ENCODE measurements at regions of chr16 and their contacts with region 1.

Region 1: GRCh38 chr16:27367461-27368357 is 34.3 kb upstream of the IL21R start:
- DNase-seq: peak; percentile 76
- H3K4me3 Mint-ChIP-seq: peak overlapping the region; percentile 56
- H3K27ac Mint-ChIP-seq: peak overlapping the region; percentile 96
- H3K4me1 Mint-ChIP-seq: peaks cover 67% of the 10 kb centered on the region
- H3K27me3 Mint-ChIP-seq: no peaks in the 10 kb centered on the region

Region 2: GRCh38 chr16:26598061-26598460 is 769.6 kb before region 1 on chr16:
- intact Hi-C with region 1: loop called (anchors 1 kb)
- DNase-seq: peak; percentile 84
- H3K4me3 Mint-ChIP-seq: peak overlapping the region; percentile 48
- H3K27ac Mint-ChIP-seq: peak overlapping the region; percentile 97
- H3K4me1 Mint-ChIP-seq: peaks cover 85% of the 10 kb centered on the region
- H3K27me3 Mint-ChIP-seq: no peaks in the 10 kb centered on the region

Region 3: DNA sequence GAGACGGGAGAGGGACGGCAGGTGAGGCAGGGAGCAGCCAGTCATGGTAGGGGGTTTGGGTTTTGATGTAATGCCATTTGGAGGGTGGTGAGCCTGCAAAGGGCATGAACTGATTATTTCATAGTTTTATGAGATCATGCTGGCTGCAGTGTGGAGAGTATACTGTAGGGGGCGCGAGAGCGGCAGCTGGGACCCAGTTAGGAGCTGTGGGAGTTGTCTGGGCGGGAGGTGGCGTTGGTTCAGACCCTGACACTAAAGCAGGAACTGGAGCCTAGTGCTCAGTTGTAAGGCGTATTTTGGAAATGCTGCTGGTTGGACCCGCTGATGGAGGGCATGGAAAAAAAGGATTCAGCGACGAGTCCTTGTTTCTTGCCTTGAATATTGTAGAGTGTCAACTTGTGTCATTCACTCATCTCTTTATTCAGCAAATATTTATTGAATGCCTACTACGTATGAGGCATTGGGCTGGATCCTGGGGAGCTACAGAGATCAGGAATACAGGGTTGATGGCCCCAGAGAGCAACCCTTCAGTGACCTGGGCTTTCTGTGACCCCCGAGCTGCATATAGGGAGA is 188.1 kb before region 1 on chr16:
- intact Hi-C with region 1: loop called (anchors 1 kb)
- DNase-seq: peak; percentile 78
- H3K4me3 Mint-ChIP-seq: no peak overlapping the region
- H3K27ac Mint-ChIP-seq: no peak overlapping the region
- H3K4me1 Mint-ChIP-seq: peaks cover 32% of the 10 kb centered on the region
- H3K27me3 Mint-ChIP-seq: peaks cover 11% of the 10 kb centered on the region

Region 4: GRCh38 chr16:27268376-27269299 is 99.1 kb before region 1 on chr16 and contains the start of gene NSMCE1:
- intact Hi-C with region 1: loop called (anchors 1 kb)
- DNase-seq: peak; percentile 94
- H3K4me3 Mint-ChIP-seq: peak within 1 kb of the TSS; percentile 96
- H3K27ac Mint-ChIP-seq: peak within 1 kb of the TSS; percentile 97
- H3K4me1 Mint-ChIP-seq: peaks cover 75% of the 10 kb centered on the region
- H3K27me3 Mint-ChIP-seq: no peaks in the 10 kb centered on the region
- total RNA-seq, gene NSMCE1: 128 and 134 TPM in 2 replicates

Region 5: DNA sequence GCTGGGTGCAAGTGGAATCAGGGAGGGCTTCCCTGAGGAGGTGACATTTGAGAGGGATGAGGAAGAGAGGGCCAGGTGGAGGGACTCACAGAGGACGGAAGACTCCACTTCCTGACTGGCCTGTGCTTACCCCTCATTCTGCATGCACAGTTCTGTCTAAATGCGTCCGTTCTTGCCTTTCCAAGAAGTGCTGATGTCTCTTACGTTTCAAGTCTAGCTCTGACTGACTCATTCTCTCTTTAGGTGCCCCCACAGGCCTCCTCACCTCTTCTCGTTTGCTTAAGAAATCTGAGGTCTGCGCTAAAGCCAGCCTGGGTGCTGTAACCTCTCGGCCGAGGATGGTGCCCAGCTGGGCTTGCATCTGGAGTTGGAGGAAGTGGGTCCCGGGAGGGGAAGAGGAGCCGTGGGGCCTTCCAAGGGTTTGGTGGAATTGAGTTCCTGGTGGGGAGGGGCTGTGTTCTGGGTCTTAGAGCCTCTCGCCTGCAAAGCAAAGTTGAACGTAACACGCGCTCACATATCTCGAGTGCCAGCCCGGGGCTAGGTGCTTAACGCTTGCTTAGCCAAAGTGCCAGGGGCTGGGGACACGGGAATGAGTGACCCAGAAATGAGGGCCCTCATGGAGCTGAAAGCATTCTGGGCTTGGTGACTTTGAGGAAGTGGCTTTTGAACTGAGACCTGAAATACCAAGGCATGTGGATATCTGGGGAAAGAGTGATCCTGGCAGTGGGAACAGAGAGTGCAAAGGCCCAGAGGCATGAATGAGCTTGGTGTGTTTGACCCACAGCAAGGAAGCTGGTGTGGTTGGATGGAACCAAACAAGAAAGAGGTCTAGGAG is 49.1 kb before region 1 on chr16:
- intact Hi-C with region 1: loop called (anchors 1 kb)
- DNase-seq: peak; percentile 58
- H3K4me3 Mint-ChIP-seq: peak overlapping the region; percentile 94
- H3K27ac Mint-ChIP-seq: peak overlapping the region; percentile 99
- H3K4me1 Mint-ChIP-seq: peaks cover 71% of the 10 kb centered on the region
- H3K27me3 Mint-ChIP-seq: no peaks in the 10 kb centered on the region

Region 6: GRCh38 chr16:27347930-27348685 is 19.6 kb before region 1 on chr16:
- intact Hi-C with region 1: no loop called
- DNase-seq: no peak
- H3K4me3 Mint-ChIP-seq: no peak overlapping the region
- H3K27ac Mint-ChIP-seq: peak overlapping the region; percentile 68
- H3K4me1 Mint-ChIP-seq: peaks cover 19% of the 10 kb centered on the region
- H3K27me3 Mint-ChIP-seq: no peaks in the 10 kb centered on the region

Region 7: GRCh38 chr16:27394516-27394915 is 26.8 kb after region 1 on chr16:
- intact Hi-C with region 1: no loop called
- DNase-seq: no peak
- H3K4me3 Mint-ChIP-seq: no peak overlapping the region
- H3K27ac Mint-ChIP-seq: no peak overlapping the region
- H3K4me1 Mint-ChIP-seq: peaks cover 29% of the 10 kb centered on the region
- H3K27me3 Mint-ChIP-seq: no peaks in the 10 kb centered on the region

Region 8: GRCh38 chr16:27408012-27408601 is 40.4 kb after region 1 on chr16:
- intact Hi-C with region 1: loop called (anchors 1 kb)
- DNase-seq: no peak
- H3K4me3 Mint-ChIP-seq: peak overlapping the region; percentile 100
- H3K27ac Mint-ChIP-seq: peak overlapping the region; percentile 100
- H3K4me1 Mint-ChIP-seq: peaks cover 82% of the 10 kb centered on the region
- H3K27me3 Mint-ChIP-seq: no peaks in the 10 kb centered on the region